Naive thymus-derived CD4-positive, alpha-beta T cell (primary cell): ENCODE measurements at regions of chr5 and their contacts with region 1.

Region 1: GRCh38 chr5:68433923-68434879 is 218.6 kb downstream of the PIK3R1 start:
- DNase-seq: peak; percentile 45 to 91 (median 68)
- ATAC-seq: peak; percentile 94
- H3K4me3 ChIP-seq: peak overlapping the region; percentile 36
- H3K4me3 Mint-ChIP-seq: peak overlapping the region; percentile 37 to 81 (median 76)
- H3K27ac ChIP-seq: no peak overlapping the region
- H3K27ac Mint-ChIP-seq: peak overlapping the region; percentile 52 to 92 (median 76)
- H3K4me1 ChIP-seq: peaks cover 17 to 23% of the 10 kb centered on the region in 2 donors
- H3K4me1 Mint-ChIP-seq: peaks cover 23 to 45% (median 34%) of the 10 kb centered on the region in 7 donors
- H3K27me3 ChIP-seq: no peaks in the 10 kb centered on the region
- H3K27me3 Mint-ChIP-seq: peaks cover 0 to 63% (median 0%) of the 10 kb centered on the region in 5 donors

Region 2: GRCh38 chr5:66828548-66829357 is 1605.4 kb before region 1 on chr5:
- CTCF ChIA-PET with region 1: no interaction called
- POLR2A ChIA-PET with region 1: no interaction called
- intact Hi-C with region 1: loop called in 1 of 2 experiments (anchors 10 kb)
- DNase-seq: peak; percentile 14 to 67 (median 55)
- ATAC-seq: peak; percentile 93
- H3K4me3 ChIP-seq: peak overlapping the region; percentile 36
- H3K4me3 Mint-ChIP-seq: peak overlapping the region; percentile 72 to 95 (median 84)
- H3K27ac ChIP-seq: peak overlapping the region; percentile 31
- H3K27ac Mint-ChIP-seq: peak overlapping the region; percentile 12 to 92 (median 71)
- H3K4me1 ChIP-seq: peaks cover 0 to 4% of the 10 kb centered on the region in 2 donors
- H3K4me1 Mint-ChIP-seq: peaks cover 12 to 69% (median 19%) of the 10 kb centered on the region in 7 donors
- H3K27me3 ChIP-seq: no peaks in the 10 kb centered on the region
- H3K27me3 Mint-ChIP-seq: peaks cover 0 to 50% (median 26%) of the 10 kb centered on the region in 5 donors

Region 3: GRCh38 chr5:68359699-68360098 is 74.5 kb before region 1 on chr5:
- CTCF ChIA-PET with region 1: no interaction called
- POLR2A ChIA-PET with region 1: no interaction called
- intact Hi-C with region 1: loop called in 1 of 2 experiments (anchors 5 kb)
- DNase-seq: no peak
- ATAC-seq: no peak
- H3K4me3 ChIP-seq: no peak overlapping the region
- H3K4me3 Mint-ChIP-seq: no peak overlapping the region
- H3K27ac ChIP-seq: no peak overlapping the region
- H3K27ac Mint-ChIP-seq: no peak overlapping the region
- H3K4me1 ChIP-seq: no peaks in the 10 kb centered on the region
- H3K4me1 Mint-ChIP-seq: peaks cover 0 to 13% (median 2%) of the 10 kb centered on the region in 7 donors
- H3K27me3 ChIP-seq: no peaks in the 10 kb centered on the region
- H3K27me3 Mint-ChIP-seq: peaks cover 0 to 21% (median 0%) of the 10 kb centered on the region in 5 donors

Region 4: GRCh38 chr5:68369457-68370125 is 64.6 kb before region 1 on chr5:
- CTCF ChIA-PET with region 1: no interaction called
- POLR2A ChIA-PET with region 1: no interaction called
- intact Hi-C with region 1: loop called (anchors 1 to 5 kb)
- DNase-seq: peak in 7 of 9 donors; percentile 17 to 52 (median 50)
- ATAC-seq: peak; percentile 83
- H3K4me3 ChIP-seq: peak overlapping the region; percentile 26
- H3K4me3 Mint-ChIP-seq: peak overlapping the region; percentile 36 to 84 (median 76)
- H3K27ac ChIP-seq: no peak overlapping the region
- H3K27ac Mint-ChIP-seq: peak overlapping the region; percentile 23 to 91 (median 68)
- H3K4me1 ChIP-seq: peaks cover 0 to 16% of the 10 kb centered on the region in 2 donors
- H3K4me1 Mint-ChIP-seq: peaks cover 6 to 51% (median 29%) of the 10 kb centered on the region in 7 donors
- H3K27me3 ChIP-seq: no peaks in the 10 kb centered on the region
- H3K27me3 Mint-ChIP-seq: peaks cover 0 to 6% (median 0%) of the 10 kb centered on the region in 5 donors

Region 5: DNA sequence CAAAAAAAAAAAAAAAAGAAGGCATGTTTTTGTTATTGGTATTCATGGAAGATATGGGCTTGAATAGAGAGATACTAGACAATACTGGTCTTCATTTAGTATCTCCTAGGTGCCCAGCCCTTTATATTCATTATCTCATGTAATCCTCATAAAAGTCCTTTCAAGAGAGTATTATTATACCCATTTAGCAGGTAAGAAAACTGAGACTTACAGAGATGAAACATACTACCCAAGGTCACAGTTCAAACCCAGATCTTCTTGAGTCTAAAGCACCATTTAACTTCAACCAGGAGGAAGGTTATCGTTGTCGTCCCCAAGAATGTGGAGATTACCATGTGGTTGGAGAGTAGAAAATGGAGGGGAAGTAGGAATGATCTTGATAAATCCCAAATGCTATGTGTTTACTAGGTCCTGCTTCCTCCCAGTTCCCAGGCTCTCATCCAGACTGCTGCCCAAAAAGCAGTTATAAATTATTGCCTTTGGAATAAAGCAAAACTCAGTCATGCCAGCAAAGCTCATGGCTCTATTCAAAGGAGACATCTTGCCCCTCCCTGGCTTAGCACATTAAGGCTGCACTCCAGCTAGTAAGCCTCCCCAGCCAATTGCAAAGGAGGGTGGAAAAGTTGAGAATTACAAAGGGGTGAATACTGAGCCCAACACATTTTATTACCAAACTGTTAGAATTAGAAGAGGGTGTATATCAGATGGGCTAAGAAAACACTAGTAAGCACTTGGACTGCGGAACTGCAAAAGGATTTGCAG is 54.7 kb before region 1 on chr5:
- CTCF ChIA-PET with region 1: no interaction called
- POLR2A ChIA-PET with region 1: no interaction called
- intact Hi-C with region 1: loop called in 1 of 2 experiments (anchors 1 kb)
- DNase-seq: no peak
- ATAC-seq: no peak
- H3K4me3 ChIP-seq: no peak overlapping the region
- H3K4me3 Mint-ChIP-seq: no peak overlapping the region
- H3K27ac ChIP-seq: no peak overlapping the region
- H3K27ac Mint-ChIP-seq: peak overlapping the region in 1 of 9 donors; percentile 67
- H3K4me1 ChIP-seq: peaks cover 0 to 18% of the 10 kb centered on the region in 2 donors
- H3K4me1 Mint-ChIP-seq: peaks cover 0 to 84% (median 13%) of the 10 kb centered on the region in 7 donors
- H3K27me3 ChIP-seq: no peaks in the 10 kb centered on the region
- H3K27me3 Mint-ChIP-seq: peaks cover 0 to 9% (median 0%) of the 10 kb centered on the region in 5 donors

Region 6: GRCh38 chr5:68406767-68407241 is 27.4 kb before region 1 on chr5:
- CTCF ChIA-PET with region 1: no interaction called
- POLR2A ChIA-PET with region 1: no interaction called
- intact Hi-C with region 1: loop called in 1 of 2 experiments (anchors 1 kb)
- DNase-seq: peak in 3 of 9 donors; percentile 2 to 29 (median 11)
- ATAC-seq: peak; percentile 40
- H3K4me3 ChIP-seq: no peak overlapping the region
- H3K4me3 Mint-ChIP-seq: peak overlapping the region in 7 of 10 donors; percentile 5 to 66 (median 52)
- H3K27ac ChIP-seq: no peak overlapping the region
- H3K27ac Mint-ChIP-seq: peak overlapping the region in 8 of 9 donors; percentile 34 to 87 (median 54)
- H3K4me1 ChIP-seq: peaks cover 8 to 18% of the 10 kb centered on the region in 2 donors
- H3K4me1 Mint-ChIP-seq: peaks cover 12 to 26% (median 14%) of the 10 kb centered on the region in 7 donors
- H3K27me3 ChIP-seq: no peaks in the 10 kb centered on the region
- H3K27me3 Mint-ChIP-seq: peaks cover 0 to 2% (median 0%) of the 10 kb centered on the region in 5 donors

Region 7: GRCh38 chr5:68460147-68460798 is 26.1 kb after region 1 on chr5:
- CTCF ChIA-PET with region 1: no interaction called
- POLR2A ChIA-PET with region 1: no interaction called
- intact Hi-C with region 1: loop called (anchors 1 kb)
- DNase-seq: peak in 7 of 9 donors; percentile 29 to 59 (median 44)
- ATAC-seq: peak; percentile 77
- H3K4me3 ChIP-seq: no peak overlapping the region
- H3K4me3 Mint-ChIP-seq: no peak overlapping the region
- H3K27ac ChIP-seq: no peak overlapping the region
- H3K27ac Mint-ChIP-seq: peak overlapping the region in 1 of 9 donors; percentile 20
- H3K4me1 ChIP-seq: peaks cover 0 to 13% of the 10 kb centered on the region in 2 donors
- H3K4me1 Mint-ChIP-seq: peaks cover 4 to 21% (median 13%) of the 10 kb centered on the region in 7 donors
- H3K27me3 ChIP-seq: no peaks in the 10 kb centered on the region
- H3K27me3 Mint-ChIP-seq: peaks cover 0 to under 1% (median 0%) of the 10 kb centered on the region in 5 donors